ENCODE measurements at regions of chr11 and their contacts with region 1.

Region 1: GRCh38 chr11:122781378-122782195 is 56.7 kb upstream of the CRTAM start:
- DNase-seq: peak; percentile 87
- H3K4me3 Mint-ChIP-seq: no peak overlapping the region
- H3K27ac Mint-ChIP-seq: no peak overlapping the region
- H3K4me1 Mint-ChIP-seq: peaks cover 22% of the 10 kb centered on the region
- H3K27me3 Mint-ChIP-seq: no peaks in the 10 kb centered on the region

Region 2: DNA sequence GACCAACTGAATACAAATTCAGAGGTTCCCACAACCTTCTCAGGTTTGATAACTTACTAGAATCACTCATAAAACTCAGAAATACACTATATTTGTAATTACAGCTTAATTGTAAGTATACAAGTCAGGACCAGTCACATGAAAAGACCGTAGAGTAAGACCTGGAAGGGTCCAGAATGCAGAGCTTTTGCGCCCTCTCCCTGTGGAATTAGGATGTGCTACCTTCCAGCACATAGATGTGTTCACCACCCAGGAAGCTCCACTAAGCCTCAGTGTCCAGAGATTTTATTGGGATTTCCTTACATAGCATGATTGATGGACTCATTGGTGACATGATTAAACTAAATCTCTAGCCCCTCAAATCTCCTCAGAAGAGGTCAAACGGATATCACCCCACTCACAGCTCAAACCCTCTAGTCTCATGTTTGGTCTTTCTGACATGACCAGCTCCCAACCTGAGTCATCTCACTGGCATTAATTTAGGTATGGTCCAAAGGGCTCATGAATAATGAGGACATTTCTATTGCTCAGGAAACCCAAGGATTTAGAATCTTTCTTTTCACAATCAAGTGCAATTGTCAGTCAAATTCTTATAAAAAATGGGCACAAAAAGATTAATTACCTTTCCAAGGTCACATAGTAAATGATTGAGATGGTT is 203.3 kb before region 1 on chr11:
- CTCF ChIA-PET with region 1: interaction called, 33 read pairs
- intact Hi-C with region 1: loop called (anchors 1 kb)
- DNase-seq: peak; percentile 17
- H3K4me3 Mint-ChIP-seq: no peak overlapping the region
- H3K27ac Mint-ChIP-seq: no peak overlapping the region
- H3K4me1 Mint-ChIP-seq: peaks cover 7% of the 10 kb centered on the region
- H3K27me3 Mint-ChIP-seq: no peaks in the 10 kb centered on the region

Region 3: GRCh38 chr11:122628810-122629555 is 152.6 kb before region 1 on chr11:
- CTCF ChIA-PET with region 1: interaction called, 252 read pairs
- intact Hi-C with region 1: loop called (anchors 1 kb)
- DNase-seq: peak; percentile 79
- H3K4me3 Mint-ChIP-seq: no peak overlapping the region
- H3K27ac Mint-ChIP-seq: no peak overlapping the region
- H3K4me1 Mint-ChIP-seq: peaks cover 13% of the 10 kb centered on the region
- H3K27me3 Mint-ChIP-seq: no peaks in the 10 kb centered on the region

Region 4: DNA sequence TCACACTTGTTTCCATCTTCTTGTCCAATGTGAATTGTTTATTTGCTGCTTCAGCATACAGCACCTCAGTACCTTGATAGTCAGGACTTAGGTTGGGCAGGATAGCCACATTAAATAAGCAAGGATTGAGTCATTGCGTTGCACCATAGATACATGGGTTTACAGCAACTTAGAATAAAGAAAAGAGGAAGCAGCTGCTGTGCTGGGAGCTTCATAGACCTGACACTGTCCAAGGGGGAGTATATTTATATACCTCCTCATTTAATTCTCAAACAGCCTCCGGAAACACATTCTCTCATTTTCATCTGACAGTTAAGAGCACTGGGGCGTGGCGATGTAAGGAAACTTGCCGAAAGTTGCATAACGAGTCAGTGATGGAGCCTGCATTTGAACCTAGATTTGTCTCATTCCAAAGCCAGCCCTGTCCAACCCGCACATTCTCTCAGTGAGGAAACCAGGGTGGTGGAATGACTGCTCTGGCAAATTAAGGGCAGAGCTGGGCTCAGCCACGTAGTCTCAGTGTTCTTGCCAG is 83.9 kb before region 1 on chr11:
- CTCF ChIA-PET with region 1: no interaction called
- intact Hi-C with region 1: loop called (anchors 1 kb)
- DNase-seq: peak; percentile 77
- H3K4me3 Mint-ChIP-seq: peak overlapping the region; percentile 50
- H3K27ac Mint-ChIP-seq: peak overlapping the region; percentile 78
- H3K4me1 Mint-ChIP-seq: peaks cover 77% of the 10 kb centered on the region
- H3K27me3 Mint-ChIP-seq: no peaks in the 10 kb centered on the region

Region 5: GRCh38 chr11:122724520-122724919 is 57.1 kb before region 1 on chr11:
- CTCF ChIA-PET with region 1: no interaction called
- intact Hi-C with region 1: no loop called
- DNase-seq: no peak
- H3K4me3 Mint-ChIP-seq: no peak overlapping the region
- H3K27ac Mint-ChIP-seq: no peak overlapping the region
- H3K4me1 Mint-ChIP-seq: peaks cover 74% of the 10 kb centered on the region
- H3K27me3 Mint-ChIP-seq: no peaks in the 10 kb centered on the region

Region 6: GRCh38 chr11:122749005-122749687 is 32.4 kb before region 1 on chr11:
- CTCF ChIA-PET with region 1: interaction called, 33 read pairs
- intact Hi-C with region 1: loop called (anchors 1 kb)
- DNase-seq: peak; percentile 83
- H3K4me3 Mint-ChIP-seq: no peak overlapping the region
- H3K27ac Mint-ChIP-seq: no peak overlapping the region
- H3K4me1 Mint-ChIP-seq: peaks cover 17% of the 10 kb centered on the region
- H3K27me3 Mint-ChIP-seq: peaks cover 3% of the 10 kb centered on the region

Measured in activated naive CD4-positive, alpha-beta T cell treated with anti-CD3 and anti-CD28 coated beads for 36 hours (primary cell).